ENCODE measurements at regions of chr17 and their contacts with region 1.

Region 1: DNA sequence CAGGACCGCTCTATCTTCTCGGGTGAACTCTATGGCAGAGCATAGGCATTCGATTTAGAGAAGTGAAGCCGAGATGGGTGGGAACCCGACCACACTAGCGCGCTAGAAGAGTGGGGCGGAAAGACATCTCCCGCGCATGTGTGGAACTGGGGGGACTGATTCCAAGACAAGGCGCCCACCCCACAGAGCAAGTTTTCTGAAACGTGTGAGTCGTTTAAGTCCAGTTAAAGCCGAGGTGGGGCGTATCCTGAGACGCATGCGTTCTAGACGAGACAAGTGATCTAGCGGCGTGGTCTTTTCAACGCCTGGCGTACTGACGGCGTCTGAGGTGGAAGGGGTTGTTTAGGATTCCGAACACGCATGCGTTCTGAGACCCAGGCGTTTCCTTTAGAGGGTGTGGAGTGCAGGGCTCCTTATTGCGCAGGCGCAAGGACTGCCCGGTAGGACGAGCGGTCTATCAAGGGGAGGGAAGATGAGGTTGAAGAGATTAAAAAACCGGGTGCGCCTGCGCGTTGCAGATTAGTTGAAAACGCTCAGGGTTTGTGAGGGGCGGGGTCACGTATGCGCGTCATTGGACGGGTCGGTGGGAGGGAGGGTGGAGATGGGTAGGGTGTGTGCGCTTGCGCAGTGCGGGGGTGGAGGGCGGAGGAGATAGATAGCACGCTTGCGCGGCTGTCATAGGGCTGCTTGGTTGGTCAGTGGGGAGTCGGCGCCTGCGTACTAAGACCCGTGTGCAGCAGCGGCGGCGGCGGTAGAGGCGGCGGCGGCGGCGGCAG is at the start of gene EIF5A:
- DNase-seq: peak; percentile 100
- ATAC-seq: peak; percentile 82 to 84
- H3K4me3 ChIP-seq: peak within 1 kb of the TSS; percentile 79 to 98 (median 84)
- H3K27ac ChIP-seq: peak within 1 kb of the TSS; percentile 93 to 99 (median 98)
- H3K4me1 ChIP-seq: peaks cover 29 to 31% of the 10 kb centered on the region in 2 donors
- H3K27me3 ChIP-seq: no peaks in the 10 kb centered on the region
- CTCF ChIP-seq: no peak
- POLR2A ChIP-seq: peak; percentile 95 to 96
- total RNA-seq, gene EIF5A: 115 to 384 (median 273) TPM

Region 2: DNA sequence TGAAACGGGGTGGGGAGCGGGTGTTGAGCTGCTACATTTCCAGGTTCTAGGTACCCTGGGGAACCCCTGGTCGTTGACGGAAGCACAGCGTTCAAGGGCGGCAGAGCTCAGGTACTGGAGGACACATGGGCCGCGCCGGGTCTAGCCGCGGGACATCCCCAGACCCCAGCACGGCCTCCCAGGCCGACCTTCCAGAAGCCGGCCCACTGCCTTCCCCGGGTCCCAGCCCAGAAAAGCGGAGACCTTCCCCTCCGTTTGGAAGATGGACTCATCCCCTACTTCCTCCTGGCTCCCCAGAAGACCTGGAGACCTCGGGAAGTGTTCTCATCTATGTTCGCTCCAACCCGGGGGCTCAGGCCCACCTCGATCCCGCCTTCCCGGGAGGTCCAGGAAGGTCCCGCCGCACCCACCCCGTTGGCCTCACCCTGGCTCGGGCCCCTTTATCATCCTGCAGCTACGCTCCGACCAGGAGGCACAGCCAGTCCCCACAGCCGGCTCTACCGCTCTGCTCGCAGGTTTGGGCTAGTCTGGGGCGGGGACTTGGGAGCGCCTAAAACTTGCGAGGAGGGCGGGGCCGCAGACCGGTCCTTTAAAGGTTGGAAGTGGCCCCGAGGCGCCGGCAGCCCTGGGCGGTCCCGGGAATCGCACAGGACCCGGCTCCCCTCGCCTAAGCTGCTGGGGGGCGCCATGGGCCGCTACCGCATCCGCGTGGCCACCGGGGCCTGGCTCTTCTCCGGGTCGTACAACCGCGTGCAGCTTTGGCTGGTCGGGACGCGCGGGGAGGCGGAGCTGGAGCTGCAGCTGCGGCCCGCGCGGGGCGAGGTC is 311.5 kb before region 1 on chr17 and contains the start of gene ALOX12:
- in situ Hi-C with region 1: no loop called
- intact Hi-C with region 1: no loop called
- DNase-seq: no peak
- ATAC-seq: no peak
- H3K4me3 ChIP-seq: peak within 1 kb of the TSS; percentile 13 to 30 (median 28)
- H3K27ac ChIP-seq: no peak within 1 kb of the TSS
- H3K4me1 ChIP-seq: no peaks in the 10 kb centered on the region
- H3K27me3 ChIP-seq: peaks cover 0 to 15% (median 8%) of the 10 kb centered on the region in 3 donors
- CTCF ChIP-seq: no peak
- POLR2A ChIP-seq: no peak
- total RNA-seq, gene ALOX12: not detected

Region 3: DNA sequence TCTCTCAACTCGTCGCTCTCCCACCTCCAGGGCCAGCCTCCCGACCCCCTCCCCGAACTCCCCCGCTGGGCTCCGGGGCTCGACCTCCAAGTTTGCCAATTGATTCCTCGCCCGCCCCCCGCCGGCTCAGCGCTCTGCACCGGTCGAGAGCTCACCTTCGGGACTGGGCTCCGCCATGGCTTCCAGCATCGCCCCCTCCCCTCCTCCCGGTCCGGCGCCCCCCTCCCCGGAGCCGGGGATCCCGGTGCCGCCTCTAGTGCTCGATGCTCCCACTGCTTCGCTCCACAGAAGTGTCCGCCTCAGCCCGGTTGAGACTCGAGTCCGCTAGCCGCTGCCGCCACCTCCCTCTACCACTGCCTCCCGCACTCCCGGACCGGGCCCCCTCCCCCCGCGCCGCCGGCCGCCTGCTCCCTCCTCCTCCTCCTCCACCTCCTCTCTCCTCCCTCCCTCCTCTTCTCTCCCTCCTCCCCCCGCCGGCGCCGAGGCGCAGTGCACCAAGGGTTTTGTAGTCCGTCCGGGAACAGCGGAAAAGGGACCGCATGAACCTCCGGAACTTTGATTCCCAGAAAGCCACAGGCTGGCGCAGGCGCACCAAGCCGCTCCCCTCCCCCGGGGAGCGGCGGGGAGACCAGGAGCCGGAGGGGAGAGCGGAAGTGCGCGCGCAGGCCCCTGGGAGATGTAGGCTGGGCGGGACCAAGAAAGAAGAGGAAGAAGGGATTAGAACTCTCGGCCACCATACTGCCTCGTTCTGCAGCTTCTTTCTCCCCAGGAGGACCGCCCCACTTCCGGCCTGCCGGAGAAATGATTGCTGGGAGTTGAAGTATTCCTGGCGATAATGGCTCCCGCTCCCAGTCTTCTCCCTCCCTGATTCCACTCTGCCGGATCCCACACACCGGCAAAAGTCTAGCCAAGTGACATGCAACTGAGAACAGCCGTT is 67.7 kb before region 1 on chr17 and contains the start of gene PHF23:
- in situ Hi-C with region 1: no loop called
- intact Hi-C with region 1: loop called (anchors 2 kb)
- DNase-seq: peak; percentile 100
- ATAC-seq: peak; percentile 67 to 75
- H3K4me3 ChIP-seq: peak within 1 kb of the TSS; percentile 78 to 100 (median 98)
- H3K27ac ChIP-seq: peak within 1 kb of the TSS; percentile 92 to 99 (median 98)
- H3K4me1 ChIP-seq: peaks cover 34 to 41% of the 10 kb centered on the region in 2 donors
- H3K27me3 ChIP-seq: no peaks in the 10 kb centered on the region
- CTCF ChIP-seq: peak in 2 of 5 experiments; percentile 24 to 59
- POLR2A ChIP-seq: peak; percentile 92 to 93
- total RNA-seq, gene PHF23: 16.9 to 31.8 (median 24.1) TPM

Region 4: DNA sequence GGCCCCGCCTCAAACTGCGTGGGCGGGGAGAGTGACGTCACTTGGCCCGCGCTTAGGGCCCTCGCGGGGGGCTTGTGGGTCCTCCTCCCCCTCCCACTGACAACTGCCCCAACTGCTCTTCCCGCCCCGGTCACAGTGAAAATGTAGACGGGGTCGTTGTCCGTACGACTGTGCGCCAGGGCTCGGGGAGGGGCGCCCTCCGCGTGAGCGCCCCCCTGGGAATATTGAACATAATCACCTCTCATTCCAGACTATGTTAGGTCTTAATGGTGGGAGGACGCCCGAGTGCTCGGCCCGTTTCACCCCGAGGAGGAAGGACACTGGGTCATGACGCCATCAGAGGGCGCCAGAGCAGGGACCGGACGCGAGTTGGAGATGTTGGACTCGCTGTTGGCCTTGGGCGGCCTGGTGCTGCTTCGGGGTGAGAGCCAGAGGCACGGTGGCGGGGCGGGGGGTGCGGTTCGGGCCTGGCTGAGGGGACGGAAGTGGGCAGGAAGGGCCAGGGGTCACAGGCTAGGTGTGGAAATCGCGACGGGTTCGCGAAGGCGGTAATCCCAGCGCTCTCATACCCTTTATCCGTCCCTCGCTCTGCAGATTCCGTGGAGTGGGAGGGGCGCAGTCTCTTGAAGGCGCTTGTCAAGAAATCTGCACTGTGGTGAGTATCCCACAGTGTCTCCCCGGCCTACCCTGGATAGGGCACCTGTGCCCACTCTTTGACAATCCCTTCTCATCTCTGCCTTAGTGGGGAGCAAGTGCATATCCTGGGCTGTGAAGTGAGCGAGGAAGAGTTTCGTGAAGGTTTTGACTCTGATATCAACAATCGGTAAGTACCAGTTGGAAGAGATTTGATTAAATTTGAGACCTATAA is 54.7 kb before region 1 on chr17 and contains the start of gene ELP5:
- in situ Hi-C with region 1: loop called in 1 of 4 experiments (anchors 10 kb)
- intact Hi-C with region 1: loop called (anchors 2 kb)
- DNase-seq: peak; percentile 86 to 92
- ATAC-seq: peak; percentile 58 to 61
- H3K4me3 ChIP-seq: peak within 1 kb of the TSS; percentile 69 to 98 (median 81)
- H3K27ac ChIP-seq: peak within 1 kb of the TSS; percentile 98 to 100 (median 98)
- H3K4me1 ChIP-seq: peaks cover 39 to 43% of the 10 kb centered on the region in 2 donors
- H3K27me3 ChIP-seq: no peaks in the 10 kb centered on the region
- CTCF ChIP-seq: peak in 3 of 5 experiments; percentile 36 to 54 (median 40)
- POLR2A ChIP-seq: peak in 1 of 2 donors; percentile 70
- total RNA-seq, gene ELP5: 13.3 to 52.7 (median 26.7) TPM

Region 5: GRCh38 chr17:7266784-7267183 is 40.3 kb before region 1 on chr17:
- in situ Hi-C with region 1: no loop called
- intact Hi-C with region 1: loop called (anchors 5 kb)
- DNase-seq: no peak
- ATAC-seq: no peak
- H3K4me3 ChIP-seq: no peak overlapping the region
- H3K27ac ChIP-seq: no peak overlapping the region
- H3K4me1 ChIP-seq: no peaks in the 10 kb centered on the region
- H3K27me3 ChIP-seq: peaks cover 29 to 40% (median 30%) of the 10 kb centered on the region in 3 donors
- CTCF ChIP-seq: no peak
- POLR2A ChIP-seq: no peak

Region 6: GRCh38 chr17:7280519-7281429 is 26.3 kb before region 1 on chr17:
- in situ Hi-C with region 1: no loop called
- intact Hi-C with region 1: loop called (anchors 1 kb)
- DNase-seq: peak; percentile 83 to 91
- ATAC-seq: peak; percentile 50 to 53
- H3K4me3 ChIP-seq: peak overlapping the region; percentile 70 to 80 (median 76)
- H3K27ac ChIP-seq: peak overlapping the region; percentile 95 to 100 (median 98)
- H3K4me1 ChIP-seq: peaks cover 33% of the 10 kb centered on the region in 2 donors
- H3K27me3 ChIP-seq: no peaks in the 10 kb centered on the region
- CTCF ChIP-seq: peak; percentile 95 to 99 (median 98)
- POLR2A ChIP-seq: peak; percentile 51 to 66

Region 7: DNA sequence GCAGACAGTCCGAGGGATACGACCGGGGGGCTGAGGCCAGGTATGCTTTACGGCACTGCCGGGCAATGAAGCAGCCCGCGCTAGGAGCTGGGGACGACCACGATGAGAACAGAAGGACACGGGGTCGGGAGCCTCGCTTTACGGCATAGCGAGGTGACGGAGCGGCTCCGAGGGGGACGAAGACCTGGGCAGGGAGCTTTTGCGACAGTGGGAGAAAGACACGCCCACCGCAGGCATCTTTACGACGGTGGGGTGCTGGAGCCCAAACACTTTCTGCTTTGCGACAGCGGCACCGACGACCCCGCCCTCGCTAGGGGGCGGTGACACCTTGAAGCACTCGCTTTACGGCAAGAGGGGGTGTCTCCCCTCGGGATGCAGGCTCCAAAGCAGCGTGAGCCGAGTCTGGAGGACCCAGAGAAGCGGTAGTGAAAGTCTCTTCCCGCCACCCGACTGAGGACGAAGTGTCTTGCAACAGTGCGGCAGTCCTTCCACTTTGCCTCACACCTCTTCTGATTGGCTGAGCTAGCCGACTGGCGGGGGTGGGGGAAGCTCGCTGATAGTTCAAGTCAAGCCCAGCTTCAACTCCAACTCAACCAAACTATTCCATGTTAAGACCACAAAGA is 22.4 kb after region 1 on chr17:
- in situ Hi-C with region 1: no loop called
- intact Hi-C with region 1: loop called (anchors 1 kb)
- DNase-seq: peak; percentile 97 to 99
- ATAC-seq: peak; percentile 87 to 88
- H3K4me3 ChIP-seq: peak overlapping the region; percentile 78 to 99 (median 93)
- H3K27ac ChIP-seq: peak overlapping the region; percentile 94 to 99 (median 96)
- H3K4me1 ChIP-seq: peaks cover 15 to 24% of the 10 kb centered on the region in 2 donors
- H3K27me3 ChIP-seq: peaks cover 0 to 3% (median 2%) of the 10 kb centered on the region in 3 donors
- CTCF ChIP-seq: no peak
- POLR2A ChIP-seq: peak; percentile 87 to 92

Region 8: DNA sequence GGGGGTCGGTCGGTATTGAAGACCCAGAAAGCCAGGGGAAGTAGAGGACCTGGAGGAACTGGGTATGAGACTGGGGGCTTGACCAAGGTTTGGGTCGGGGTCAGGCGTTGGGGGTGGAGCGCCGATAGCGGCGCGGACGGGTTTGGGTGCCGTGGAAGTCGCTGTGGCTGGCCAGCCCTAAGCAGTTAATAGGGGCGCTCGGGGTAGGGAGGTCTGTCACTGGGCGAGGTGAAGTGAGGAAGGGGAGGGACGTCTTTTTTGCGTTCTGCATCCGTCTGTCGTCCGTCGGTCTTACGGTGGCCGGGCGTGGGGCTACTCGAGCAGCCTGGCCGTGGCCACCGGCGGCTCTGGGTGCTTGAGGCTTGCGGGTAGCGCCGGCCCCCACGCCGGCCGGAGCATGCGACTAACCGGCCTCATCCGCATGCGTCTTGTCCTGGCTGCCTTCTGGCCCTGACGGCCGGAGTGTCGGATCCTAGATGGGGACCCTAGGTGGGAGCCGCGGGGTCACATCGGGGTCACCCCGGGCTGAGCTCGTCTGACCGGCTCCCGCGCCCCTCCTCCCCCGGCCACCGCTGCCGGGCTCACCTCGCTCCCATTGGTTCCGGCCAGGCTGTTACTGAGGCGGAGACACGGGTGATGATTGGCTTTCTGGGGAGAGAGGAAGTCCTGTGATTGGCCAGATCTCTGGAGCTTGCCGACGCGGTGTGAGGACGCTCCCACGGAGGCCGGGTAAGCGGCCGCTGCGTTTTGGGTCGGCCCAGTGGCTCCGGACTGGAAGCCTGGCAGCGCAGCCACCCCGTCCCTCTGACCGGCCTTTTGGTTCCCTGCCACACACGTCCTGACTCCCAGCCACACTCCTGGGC is 537.4 kb after region 1 on chr17:
- in situ Hi-C with region 1: no loop called
- intact Hi-C with region 1: loop called (anchors 10 kb)
- DNase-seq: peak; percentile 93 to 95
- ATAC-seq: peak; percentile 70 to 73
- H3K4me3 ChIP-seq: peak overlapping the region; percentile 80 to 96 (median 88)
- H3K27ac ChIP-seq: peak overlapping the region; percentile 97 to 100 (median 100)
- H3K4me1 ChIP-seq: peaks cover 28 to 32% of the 10 kb centered on the region in 2 donors
- H3K27me3 ChIP-seq: no peaks in the 10 kb centered on the region
- CTCF ChIP-seq: no peak
- POLR2A ChIP-seq: peak; percentile 97

Measured in gastrocnemius medialis (tissue), 4 donors.